WTC11 (cell line): ENCODE measurements at regions of chr3 and their contacts with region 1.

Region 1: DNA sequence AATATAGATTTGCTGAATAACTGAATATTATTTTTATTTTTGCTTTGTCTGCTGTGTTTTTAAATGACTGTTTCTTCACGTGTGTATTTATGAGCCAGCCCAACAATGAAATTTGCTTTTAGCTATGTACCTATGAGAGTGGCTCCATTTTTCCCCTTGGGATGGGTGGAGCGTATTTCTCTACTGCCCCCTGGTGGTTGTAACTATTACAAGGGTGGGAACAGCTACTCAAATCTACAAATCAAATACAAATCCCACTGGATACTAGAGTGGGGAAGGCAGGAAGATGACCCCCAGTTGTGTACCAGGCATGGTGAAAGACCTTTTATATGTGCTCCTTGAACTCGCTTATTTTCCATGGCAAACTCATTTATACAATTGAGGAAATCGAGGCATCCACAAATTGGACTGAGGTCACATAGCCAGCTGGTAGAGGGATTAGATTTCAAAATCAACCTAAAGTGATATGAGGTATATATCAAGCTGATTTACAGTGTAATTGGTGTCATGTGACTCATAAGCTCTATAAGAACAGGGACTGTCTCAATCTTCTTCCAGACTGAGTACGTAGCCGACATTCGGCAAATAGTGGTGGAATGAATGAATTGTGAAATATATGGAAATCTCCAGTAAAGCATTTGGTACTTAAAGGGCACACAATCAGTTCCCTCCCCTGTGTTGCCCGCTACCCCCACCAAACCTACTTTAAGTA is 69.5 kb upstream of the VEPH1 start:
- DNase-seq: peak; percentile 42
- ATAC-seq: peak; percentile 97
- H3K4me3 Mint-ChIP-seq: no peak overlapping the region
- H3K27ac Mint-ChIP-seq: no peak overlapping the region
- H3K4me1 Mint-ChIP-seq: no peaks in the 10 kb centered on the region
- H3K27me3 Mint-ChIP-seq: no peaks in the 10 kb centered on the region
- CTCF ChIP-seq: peak; percentile 84

Region 2: DNA sequence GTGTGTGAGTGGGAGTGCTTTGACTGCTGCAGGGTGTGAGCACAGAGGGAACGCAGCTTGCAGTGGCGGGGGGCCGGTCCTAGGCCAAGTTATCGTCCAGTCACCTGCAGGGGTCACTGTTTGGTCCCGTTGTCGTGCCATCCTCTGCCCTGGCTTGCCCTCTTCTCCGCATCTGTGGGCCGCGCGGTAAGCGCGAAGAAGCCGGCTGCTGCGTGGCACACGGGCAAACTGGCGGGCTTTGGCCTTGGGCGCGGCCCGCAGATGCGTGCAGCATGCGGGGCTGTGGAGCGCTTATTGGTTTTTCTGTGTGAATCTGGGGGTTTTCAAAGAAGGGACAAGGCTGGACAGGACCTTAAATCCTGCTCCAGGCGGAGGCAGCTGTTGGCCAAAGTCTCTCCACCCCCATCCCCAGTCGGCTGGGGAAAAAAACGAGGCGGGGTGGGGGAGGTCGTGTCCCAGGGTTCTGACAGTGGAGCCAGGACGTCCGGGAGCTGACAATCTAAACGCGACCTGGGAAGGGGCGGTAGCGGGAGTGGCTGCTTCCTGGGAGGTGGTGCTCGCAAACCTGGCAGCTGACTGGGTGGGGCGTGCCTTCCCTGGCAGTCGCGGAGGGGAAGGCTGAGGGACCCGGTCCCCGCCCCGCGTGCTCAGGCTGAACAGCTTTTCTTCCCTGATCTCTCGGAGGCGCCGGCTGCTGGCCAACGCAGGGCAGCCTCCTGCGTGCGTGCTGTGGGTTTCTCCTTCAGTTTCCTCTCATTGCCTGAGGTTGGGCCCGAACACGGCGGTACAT is 29.8 kb before region 1 on chr3:
- CTCF ChIA-PET with region 1: interaction called, 33 read pairs
- POLR2A ChIA-PET with region 1: no interaction called
- DNase-seq: peak; percentile 72
- ATAC-seq: peak; percentile 92
- H3K4me3 Mint-ChIP-seq: peak overlapping the region; percentile 78
- H3K27ac Mint-ChIP-seq: no peak overlapping the region
- H3K4me1 Mint-ChIP-seq: 0 out of 2 replicates have a peak, but pooled peaks cover 3% of the 10 kb centered on the region
- H3K27me3 Mint-ChIP-seq: peaks cover 24% of the 10 kb centered on the region
- CTCF ChIP-seq: 0 out of 2 replicates have a peak, but pooled peaks have one; percentile 23

Region 3: GRCh38 chr3:157594413-157594812 is 21.7 kb after region 1 on chr3:
- CTCF ChIA-PET with region 1: interaction called, 12 read pairs
- POLR2A ChIA-PET with region 1: no interaction called
- DNase-seq: peak; percentile 16
- ATAC-seq: peak; percentile 89
- H3K4me3 Mint-ChIP-seq: no peak overlapping the region
- H3K27ac Mint-ChIP-seq: no peak overlapping the region
- H3K4me1 Mint-ChIP-seq: peaks cover 4% of the 10 kb centered on the region
- H3K27me3 Mint-ChIP-seq: no peaks in the 10 kb centered on the region
- CTCF ChIP-seq: no peak

Region 4: DNA sequence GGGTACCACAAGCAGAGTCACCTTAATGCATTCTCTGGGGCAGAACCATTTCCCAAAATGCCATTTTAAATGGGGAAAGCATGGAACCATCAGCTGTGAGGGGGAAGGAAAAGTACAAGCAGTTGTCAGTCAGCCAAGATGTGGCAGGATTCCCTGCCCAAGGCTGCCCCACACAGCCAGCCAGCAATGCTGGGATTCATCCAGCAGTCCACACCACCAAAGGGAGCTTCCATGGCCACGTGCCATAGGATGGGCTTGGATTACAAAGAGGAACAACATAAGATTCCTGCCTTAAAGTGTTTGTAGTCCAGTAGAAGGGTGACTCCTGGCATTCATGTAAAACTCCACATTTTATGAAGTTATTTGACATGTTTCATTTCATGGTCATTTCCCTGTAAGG is 300.2 kb after region 1 on chr3:
- CTCF ChIA-PET with region 1: no interaction called
- POLR2A ChIA-PET with region 1: no interaction called
- DNase-seq: no peak
- ATAC-seq: no peak
- H3K4me3 Mint-ChIP-seq: no peak overlapping the region
- H3K27ac Mint-ChIP-seq: no peak overlapping the region
- H3K4me1 Mint-ChIP-seq: peaks cover 13% of the 10 kb centered on the region
- H3K27me3 Mint-ChIP-seq: no peaks in the 10 kb centered on the region
- CTCF ChIP-seq: no peak